ENCODE measurements at regions of chr6 and their contacts with region 1.

Region 1: GRCh38 chr6:3848925-3849605 is at the start of gene FAM50B:
- DNase-seq: peak; percentile 84
- H3K4me3 Mint-ChIP-seq: peak within 1 kb of the TSS; percentile 75
- H3K27ac Mint-ChIP-seq: peak within 1 kb of the TSS; percentile 95
- H3K4me1 Mint-ChIP-seq: peaks cover 17% of the 10 kb centered on the region
- H3K27me3 Mint-ChIP-seq: no peaks in the 10 kb centered on the region
- CTCF ChIP-seq: peak; percentile 76
- total RNA-seq, gene FAM50B: 4.0 and 4.3 TPM in 2 replicates

Region 2: GRCh38 chr6:3176562-3177355 is 672.3 kb before region 1 on chr6:
- CTCF ChIA-PET with region 1: no interaction called
- POLR2A ChIA-PET with region 1: no interaction called
- intact Hi-C with region 1: no loop called
- DNase-seq: peak; percentile 84
- H3K4me3 Mint-ChIP-seq: no peak overlapping the region
- H3K27ac Mint-ChIP-seq: no peak overlapping the region
- H3K4me1 Mint-ChIP-seq: no peaks in the 10 kb centered on the region
- H3K27me3 Mint-ChIP-seq: no peaks in the 10 kb centered on the region
- CTCF ChIP-seq: no peak

Region 3: DNA sequence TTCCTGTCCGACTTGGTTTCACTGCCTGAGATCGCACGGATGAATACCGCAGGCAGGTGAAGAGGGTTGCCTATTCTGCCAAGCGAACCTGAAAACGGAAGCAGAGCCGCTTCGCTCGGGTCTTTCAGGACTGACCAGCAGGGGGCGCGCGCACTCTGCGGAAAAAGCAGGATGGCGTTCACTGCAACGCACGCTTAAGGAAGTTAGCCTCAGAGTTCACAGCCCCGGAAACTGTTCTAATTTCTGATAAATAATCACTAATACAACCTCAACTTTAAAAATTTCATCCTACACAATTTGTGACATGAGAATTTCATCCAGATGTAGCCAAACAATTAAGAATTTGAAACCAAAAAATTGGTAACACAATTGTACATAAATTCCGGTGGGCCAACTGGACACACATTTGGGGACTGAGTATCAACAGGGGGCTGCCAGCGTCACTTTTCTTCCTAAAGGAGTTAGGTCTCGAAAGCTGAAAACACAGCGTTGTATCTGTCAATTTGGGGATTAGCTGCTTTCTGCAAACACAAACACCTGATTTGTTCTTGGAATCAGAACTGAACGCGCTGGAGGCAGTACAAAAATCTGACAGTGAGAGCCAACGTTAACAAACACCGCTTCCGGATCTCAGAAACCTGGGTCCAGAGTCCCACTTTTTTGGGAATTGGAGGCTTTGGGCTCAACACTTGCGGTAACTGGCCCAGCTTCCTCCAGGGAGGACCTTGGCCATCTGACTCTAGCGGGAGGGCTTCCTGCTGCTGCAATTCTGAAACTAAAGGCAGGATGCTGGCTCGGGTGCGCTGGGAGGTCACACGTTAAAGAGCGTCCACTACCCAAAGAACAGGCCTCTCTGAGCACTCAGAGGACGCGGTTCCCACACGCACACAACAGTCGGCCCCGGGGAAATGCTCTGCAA is 106.4 kb before region 1 on chr6:
- CTCF ChIA-PET with region 1: interaction called, 21 read pairs
- POLR2A ChIA-PET with region 1: interaction called, 31 read pairs
- intact Hi-C with region 1: no loop called
- DNase-seq: peak; percentile 79
- H3K4me3 Mint-ChIP-seq: no peak overlapping the region
- H3K27ac Mint-ChIP-seq: peak overlapping the region; percentile 52
- H3K4me1 Mint-ChIP-seq: peaks cover 31% of the 10 kb centered on the region
- H3K27me3 Mint-ChIP-seq: no peaks in the 10 kb centered on the region
- CTCF ChIP-seq: peak; percentile 92

Region 4: GRCh38 chr6:3798055-3798919 is 50.8 kb before region 1 on chr6:
- CTCF ChIA-PET with region 1: interaction called, 3 read pairs
- POLR2A ChIA-PET with region 1: interaction called, 12 read pairs
- intact Hi-C with region 1: loop called (anchors 1 kb)
- DNase-seq: no peak
- H3K4me3 Mint-ChIP-seq: no peak overlapping the region
- H3K27ac Mint-ChIP-seq: peak overlapping the region; percentile 54
- H3K4me1 Mint-ChIP-seq: peaks cover 22% of the 10 kb centered on the region
- H3K27me3 Mint-ChIP-seq: no peaks in the 10 kb centered on the region
- CTCF ChIP-seq: no peak

Region 5: GRCh38 chr6:3861424-3861823 is 12.4 kb after region 1 on chr6:
- CTCF ChIA-PET with region 1: interaction called, 27 read pairs
- POLR2A ChIA-PET with region 1: interaction called, 12 read pairs
- intact Hi-C with region 1: no loop called
- DNase-seq: peak; percentile 49
- H3K4me3 Mint-ChIP-seq: no peak overlapping the region
- H3K27ac Mint-ChIP-seq: no peak overlapping the region
- H3K4me1 Mint-ChIP-seq: no peaks in the 10 kb centered on the region
- H3K27me3 Mint-ChIP-seq: no peaks in the 10 kb centered on the region
- CTCF ChIP-seq: no peak

Region 6: DNA sequence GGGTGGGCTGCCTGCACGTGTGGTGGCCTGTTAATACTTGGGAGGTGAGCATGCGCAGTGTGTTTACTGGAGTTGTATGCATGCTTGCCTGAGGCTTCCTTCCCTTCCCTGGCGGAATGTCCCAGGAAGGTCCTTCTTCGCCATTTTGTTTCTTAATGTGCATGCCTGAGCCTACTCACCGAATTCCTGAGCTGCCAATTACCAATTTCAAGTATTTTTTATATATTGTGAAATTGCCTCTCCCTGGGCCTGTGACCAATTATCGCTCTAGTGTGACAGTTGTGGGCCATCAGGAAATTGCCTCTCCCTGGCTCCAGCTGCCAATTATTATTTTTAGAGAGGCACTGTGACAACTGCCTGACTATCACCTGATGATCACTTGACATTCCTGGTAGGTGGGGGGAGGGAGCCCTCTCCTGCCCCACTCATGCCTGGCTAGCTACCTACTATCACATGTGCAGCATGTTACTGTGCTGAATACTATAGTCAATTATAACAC is 70.1 kb after region 1 on chr6:
- CTCF ChIA-PET with region 1: interaction called, 21 read pairs
- POLR2A ChIA-PET with region 1: interaction called, 34 read pairs
- intact Hi-C with region 1: no loop called
- DNase-seq: peak; percentile 85
- H3K4me3 Mint-ChIP-seq: no peak overlapping the region
- H3K27ac Mint-ChIP-seq: peak overlapping the region; percentile 84
- H3K4me1 Mint-ChIP-seq: peaks cover 21% of the 10 kb centered on the region
- H3K27me3 Mint-ChIP-seq: no peaks in the 10 kb centered on the region
- CTCF ChIP-seq: no peak

Region 7: GRCh38 chr6:3977875-3978711 is 129.0 kb after region 1 on chr6:
- CTCF ChIA-PET with region 1: interaction called, 3 read pairs
- POLR2A ChIA-PET with region 1: interaction called, 5 read pairs
- intact Hi-C with region 1: loop called (anchors 1 kb)
- DNase-seq: peak; percentile 69
- H3K4me3 Mint-ChIP-seq: no peak overlapping the region
- H3K27ac Mint-ChIP-seq: no peak overlapping the region
- H3K4me1 Mint-ChIP-seq: no peaks in the 10 kb centered on the region
- H3K27me3 Mint-ChIP-seq: no peaks in the 10 kb centered on the region
- CTCF ChIP-seq: peak; percentile 43

Region 8: DNA sequence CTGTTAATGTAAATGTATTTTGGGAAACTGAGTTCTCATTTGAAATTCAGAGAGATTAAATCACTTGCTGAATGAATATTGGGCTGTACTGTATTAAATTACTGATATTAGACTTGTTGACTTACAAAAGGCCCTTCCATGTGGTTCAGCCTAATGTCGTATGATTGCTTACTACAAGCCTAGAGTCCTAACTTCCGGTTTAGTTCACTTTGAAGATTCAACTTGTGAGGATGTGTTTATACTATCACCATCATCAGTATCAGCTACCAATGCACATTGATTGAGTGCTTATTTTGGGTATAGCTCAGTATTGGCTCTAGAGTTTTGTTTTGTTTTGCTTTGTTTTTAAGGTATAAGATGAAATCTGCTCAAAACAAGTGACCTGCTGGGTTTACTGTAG is 181.6 kb after region 1 on chr6:
- CTCF ChIA-PET with region 1: no interaction called
- POLR2A ChIA-PET with region 1: no interaction called
- intact Hi-C with region 1: no loop called
- DNase-seq: no peak
- H3K4me3 Mint-ChIP-seq: no peak overlapping the region
- H3K27ac Mint-ChIP-seq: no peak overlapping the region
- H3K4me1 Mint-ChIP-seq: peaks cover 37% of the 10 kb centered on the region
- H3K27me3 Mint-ChIP-seq: no peaks in the 10 kb centered on the region
- CTCF ChIP-seq: no peak